ENCODE measurements at regions of chr2 and their contacts with region 1.

Region 1: GRCh38 chr2:230053753-230054478 is 14.8 kb downstream of the SLC16A14 start:
- DNase-seq: no peak
- ATAC-seq: peak; percentile 70
- H3K4me3 ChIP-seq: peak overlapping the region in 1 of 2 experiments; percentile 18; a peak in 2 of 4 replicates
- H3K27ac ChIP-seq: peak overlapping the region; percentile 79
- H3K4me1 ChIP-seq: peaks cover 24 to 34% of the 10 kb centered on the region in 2 experiments
- H3K27me3 ChIP-seq: no peaks in the 10 kb centered on the region
- CTCF ChIP-seq: no peak
- POLR2A ChIP-seq: no peak
- RAD21 ChIP-seq: no peak

Region 2: DNA sequence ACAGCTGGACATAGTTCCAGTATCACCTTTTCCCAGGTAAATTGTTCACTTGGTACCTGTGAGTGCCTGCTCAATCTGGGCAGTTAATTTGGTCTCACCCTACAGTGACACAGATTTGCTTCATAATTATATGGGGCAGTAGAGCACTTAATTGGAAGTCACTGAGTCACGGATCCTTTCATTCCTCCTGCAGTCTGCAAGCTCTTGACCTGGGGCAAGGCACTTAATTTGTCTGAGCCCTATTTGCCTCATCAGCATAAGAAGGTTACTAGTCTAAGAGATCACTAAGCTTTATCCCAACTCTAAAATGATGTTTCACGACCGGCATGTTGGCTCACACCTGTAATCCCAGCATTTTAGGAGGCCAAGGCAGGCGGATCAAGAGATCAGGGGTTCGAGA is 122.7 kb before region 1 on chr2:
- CTCF ChIA-PET with region 1: no interaction called
- POLR2A ChIA-PET with region 1: no interaction called
- RAD21 ChIA-PET with region 1: no interaction called
- intact Hi-C with region 1: no loop called
- DNase-seq: no peak
- ATAC-seq: no peak
- H3K4me3 ChIP-seq: no peak overlapping the region
- H3K27ac ChIP-seq: no peak overlapping the region
- H3K4me1 ChIP-seq: peaks cover 4 to 6% of the 10 kb centered on the region in 2 experiments; a peak in 3 of 4 replicates
- H3K27me3 ChIP-seq: no peaks in the 10 kb centered on the region
- CTCF ChIP-seq: no peak
- POLR2A ChIP-seq: no peak
- RAD21 ChIP-seq: no peak

Region 3: DNA sequence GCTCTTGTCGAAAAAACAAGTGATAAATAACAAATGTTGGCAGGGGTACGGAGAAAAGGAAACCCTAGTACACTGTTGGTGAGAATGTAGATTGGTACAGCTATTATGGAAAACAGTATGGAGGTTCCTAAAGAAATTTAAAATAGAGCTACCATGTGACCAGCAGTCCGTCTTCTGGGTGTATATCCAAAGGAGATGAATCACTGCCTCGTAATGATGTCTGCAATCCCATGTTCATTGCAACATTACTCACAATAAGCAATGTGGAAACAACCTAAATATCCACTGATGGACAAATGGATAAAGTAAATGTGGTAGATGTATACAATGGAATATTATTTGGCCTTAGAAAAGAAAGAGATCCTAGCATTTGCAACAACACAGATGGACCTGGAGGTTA is 35.8 kb before region 1 on chr2:
- CTCF ChIA-PET with region 1: no interaction called
- POLR2A ChIA-PET with region 1: no interaction called
- RAD21 ChIA-PET with region 1: no interaction called
- intact Hi-C with region 1: no loop called
- DNase-seq: no peak
- ATAC-seq: no peak
- H3K4me3 ChIP-seq: no peak overlapping the region
- H3K27ac ChIP-seq: no peak overlapping the region
- H3K4me1 ChIP-seq: no peaks in the 10 kb centered on the region
- H3K27me3 ChIP-seq: no peaks in the 10 kb centered on the region
- CTCF ChIP-seq: no peak
- POLR2A ChIP-seq: no peak
- RAD21 ChIP-seq: no peak

Region 4: GRCh38 chr2:230068016-230068650 is 14.2 kb after region 1 on chr2:
- CTCF ChIA-PET with region 1: interaction called, 22 read pairs
- POLR2A ChIA-PET with region 1: interaction called, 3 read pairs
- RAD21 ChIA-PET with region 1: interaction called in 1 of 2 experiments, 3 read pairs
- intact Hi-C with region 1: no loop called
- DNase-seq: no peak
- ATAC-seq: peak; percentile 64
- H3K4me3 ChIP-seq: peak overlapping the region; percentile 74 to 82
- H3K27ac ChIP-seq: peak overlapping the region; percentile 76
- H3K4me1 ChIP-seq: peaks cover 0 to 18% of the 10 kb centered on the region in 2 experiments; a peak in 3 of 4 replicates
- H3K27me3 ChIP-seq: no peaks in the 10 kb centered on the region
- CTCF ChIP-seq: peak in 1 of 3 experiments; percentile 23; a peak in 1 of 6 replicates
- POLR2A ChIP-seq: no peak
- RAD21 ChIP-seq: no peak

Region 5: GRCh38 chr2:230244211-230244610 is 190.3 kb after region 1 on chr2:
- CTCF ChIA-PET with region 1: no interaction called
- POLR2A ChIA-PET with region 1: no interaction called
- RAD21 ChIA-PET with region 1: no interaction called
- intact Hi-C with region 1: no loop called
- DNase-seq: no peak
- ATAC-seq: no peak
- H3K4me3 ChIP-seq: no peak overlapping the region
- H3K27ac ChIP-seq: no peak overlapping the region
- H3K4me1 ChIP-seq: no peaks in the 10 kb centered on the region
- H3K27me3 ChIP-seq: peaks cover 5% of the 10 kb centered on the region
- CTCF ChIP-seq: no peak
- POLR2A ChIP-seq: no peak
- RAD21 ChIP-seq: no peak

Measured in HCT116 (cell line).